Left lung (tissue), 14 donors: ENCODE measurements at regions of chr10 and their contacts with region 1.

Region 1: GRCh38 chr10:44932517-44933450 is 21.6 kb downstream of the TMEM72 start:
- DNase-seq: peak; percentile 67 to 98 (median 87)
- ATAC-seq: peak; percentile 97
- H3K4me3 ChIP-seq: no peak overlapping the region
- H3K27ac ChIP-seq: no peak overlapping the region
- H3K4me1 ChIP-seq: peaks cover 8 to 50% of the 10 kb centered on the region in 2 donors
- H3K27me3 ChIP-seq: no peaks in the 10 kb centered on the region
- CTCF ChIP-seq: peak; percentile 94 to 98

Region 2: GRCh38 chr10:44786286-44786850 is 146.4 kb before region 1 on chr10:
- intact Hi-C with region 1: no loop called
- DNase-seq: peak in 1 of 4 donors; percentile 13
- ATAC-seq: peak; percentile 59
- H3K4me3 ChIP-seq: no peak overlapping the region
- H3K27ac ChIP-seq: no peak overlapping the region
- H3K4me1 ChIP-seq: no peaks in the 10 kb centered on the region
- H3K27me3 ChIP-seq: no peaks in the 10 kb centered on the region
- CTCF ChIP-seq: no peak

Region 3: GRCh38 chr10:44974628-44975431 is 42.0 kb after region 1 on chr10:
- intact Hi-C with region 1: loop called in 1 of 2 experiments (anchors 5 kb)
- DNase-seq: peak; percentile 73 to 95 (median 78)
- ATAC-seq: peak; percentile 82
- H3K4me3 ChIP-seq: peak overlapping the region; percentile 29 to 37
- H3K27ac ChIP-seq: peak overlapping the region; percentile 74 to 82
- H3K4me1 ChIP-seq: peaks cover 31 to 90% of the 10 kb centered on the region in 2 donors
- H3K27me3 ChIP-seq: no peaks in the 10 kb centered on the region
- CTCF ChIP-seq: peak; percentile 97 to 98